Endothelial cell of umbilical vein (primary cell): ENCODE measurements at regions of chr7 and their contacts with region 1.

Region 1: DNA sequence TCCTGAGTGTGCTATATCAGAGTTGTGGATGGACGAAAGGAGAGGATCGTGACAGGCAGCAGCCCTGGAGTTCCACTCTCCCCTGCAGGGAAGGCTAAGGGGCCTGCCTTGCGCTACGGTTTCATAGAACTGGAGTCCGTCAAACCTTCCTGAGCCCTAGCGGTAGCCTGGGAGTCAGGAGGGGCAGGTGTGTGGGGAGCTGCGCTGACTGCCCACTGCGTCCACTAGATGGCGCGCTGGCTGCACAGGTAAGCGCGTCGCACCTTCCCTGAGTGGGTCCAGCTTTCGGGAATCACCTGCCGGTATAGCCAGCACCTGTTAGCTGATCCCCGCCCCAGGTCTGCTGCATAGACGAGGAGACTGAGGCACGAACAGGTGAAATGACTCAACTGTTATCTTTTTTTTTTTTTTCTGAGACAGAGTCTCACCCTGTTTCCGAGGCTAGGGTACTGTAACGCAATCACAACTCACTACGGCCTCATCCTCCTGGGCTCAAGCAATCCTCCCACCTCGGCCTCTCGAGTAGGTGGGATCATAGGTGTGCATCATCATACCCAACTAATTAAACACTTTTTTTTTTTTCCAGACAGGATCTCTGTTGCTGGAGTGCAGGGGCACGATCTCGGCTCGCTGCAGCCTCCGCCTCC is 20.2 kb upstream of the BAIAP2L1 start:
- DNase-seq: peak; percentile 36
- H3K4me3 ChIP-seq: no peak overlapping the region
- H3K27ac ChIP-seq: no peak overlapping the region
- H3K4me1 ChIP-seq: peaks cover 13% of the 10 kb centered on the region
- H3K27me3 ChIP-seq: no peaks in the 10 kb centered on the region
- CTCF ChIP-seq: peak; percentile 79 to 95
- POLR2A ChIP-seq: no peak

Region 2: GRCh38 chr7:98021588-98022351 is 399.3 kb before region 1 on chr7:
- CTCF ChIA-PET with region 1: no interaction called
- POLR2A ChIA-PET with region 1: no interaction called
- dilution Hi-C with region 1: no loop called
- intact Hi-C with region 1: no loop called
- DNase-seq: peak; percentile 46
- H3K4me3 ChIP-seq: no peak overlapping the region
- H3K27ac ChIP-seq: no peak overlapping the region
- H3K4me1 ChIP-seq: no peaks in the 10 kb centered on the region
- H3K27me3 ChIP-seq: no peaks in the 10 kb centered on the region
- CTCF ChIP-seq: peak; percentile 87 to 94
- POLR2A ChIP-seq: no peak

Region 3: DNA sequence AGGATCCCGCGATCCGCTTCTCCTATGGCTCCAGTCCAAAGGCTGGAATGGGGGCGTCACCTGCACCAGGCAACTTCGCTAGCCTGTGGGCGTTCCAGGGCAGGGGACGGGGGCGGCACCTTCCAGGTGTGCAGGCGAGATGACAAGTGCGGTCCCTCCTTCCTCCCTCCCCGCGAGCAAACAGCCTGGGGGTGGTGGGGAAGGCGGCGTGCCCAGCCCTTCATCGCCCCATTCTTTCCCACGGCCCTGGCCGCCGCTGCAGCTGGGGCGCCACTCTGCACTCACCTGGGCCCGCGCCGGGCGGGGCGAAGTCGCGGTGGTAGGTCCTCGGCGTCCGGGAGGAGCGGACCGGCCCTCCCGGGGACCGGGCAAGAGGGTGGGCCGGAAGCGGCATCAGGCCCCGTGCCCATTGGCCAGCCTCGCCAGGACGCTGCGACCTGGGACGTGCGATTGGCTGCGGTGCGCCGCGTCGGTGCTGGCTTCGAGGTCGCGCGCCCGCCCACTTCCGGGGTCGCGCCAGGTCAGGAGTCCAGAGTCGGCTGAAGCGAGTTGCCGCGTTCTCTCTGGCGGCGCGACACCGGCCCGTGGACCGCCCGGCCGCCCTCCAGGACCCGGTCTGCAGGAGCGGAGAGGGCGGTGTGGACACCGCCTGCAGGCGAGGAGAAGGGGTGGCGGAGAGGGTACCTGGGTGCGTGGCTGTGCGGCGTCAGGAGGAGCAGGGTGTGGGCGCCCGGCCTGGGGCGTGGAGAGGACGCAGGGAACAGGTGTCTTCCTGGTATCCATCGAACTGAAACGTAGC is 169.0 kb before region 1 on chr7 and contains the start of gene TECPR1:
- CTCF ChIA-PET with region 1: no interaction called
- POLR2A ChIA-PET with region 1: interaction called, 4 read pairs
- dilution Hi-C with region 1: no loop called
- intact Hi-C with region 1: loop called (anchors 1 kb)
- DNase-seq: peak; percentile 89
- H3K4me3 ChIP-seq: peak within 1 kb of the TSS; percentile 53 to 96 (median 65)
- H3K27ac ChIP-seq: peak within 1 kb of the TSS; percentile 58
- H3K4me1 ChIP-seq: peaks cover 43% of the 10 kb centered on the region
- H3K27me3 ChIP-seq: no peaks in the 10 kb centered on the region
- CTCF ChIP-seq: no peak
- POLR2A ChIP-seq: peak; percentile 35
- total RNA-seq, gene TECPR1: 84.9 and 97.5 TPM in 2 replicates

Region 4: GRCh38 chr7:98354511-98355257 is 66.4 kb before region 1 on chr7:
- CTCF ChIA-PET with region 1: interaction called, 3 read pairs
- POLR2A ChIA-PET with region 1: no interaction called
- dilution Hi-C with region 1: no loop called
- intact Hi-C with region 1: loop called (anchors 1 kb)
- DNase-seq: peak; percentile 68
- H3K4me3 ChIP-seq: no peak overlapping the region
- H3K27ac ChIP-seq: peak overlapping the region; percentile 14
- H3K4me1 ChIP-seq: peaks cover 19% of the 10 kb centered on the region
- H3K27me3 ChIP-seq: no peaks in the 10 kb centered on the region
- CTCF ChIP-seq: no peak
- POLR2A ChIP-seq: no peak

Region 5: DNA sequence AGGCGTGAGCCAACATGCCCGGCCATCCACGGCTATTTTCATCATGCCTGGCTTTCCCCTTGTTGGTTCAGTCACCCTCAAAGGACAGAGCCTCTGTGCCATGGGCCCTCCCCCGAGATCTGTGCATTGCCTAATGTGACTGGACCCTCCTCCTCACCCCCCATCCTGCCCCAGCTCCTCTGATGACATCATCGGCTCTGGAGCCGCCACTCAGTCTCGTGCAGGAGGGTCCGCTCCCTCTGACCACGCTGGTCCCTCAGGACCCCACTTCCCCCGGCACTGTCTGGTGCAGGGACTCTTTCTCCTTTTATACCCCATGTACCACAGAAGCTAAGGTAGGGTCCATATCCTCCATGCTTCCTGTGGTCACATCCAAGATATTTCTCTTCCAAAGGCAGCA is 13.0 kb after region 1 on chr7:
- CTCF ChIA-PET with region 1: interaction called, 15 read pairs
- POLR2A ChIA-PET with region 1: no interaction called
- dilution Hi-C with region 1: no loop called
- intact Hi-C with region 1: no loop called
- DNase-seq: no peak
- H3K4me3 ChIP-seq: no peak overlapping the region
- H3K27ac ChIP-seq: no peak overlapping the region
- H3K4me1 ChIP-seq: no peaks in the 10 kb centered on the region
- H3K27me3 ChIP-seq: no peaks in the 10 kb centered on the region
- CTCF ChIP-seq: no peak
- POLR2A ChIP-seq: no peak

Region 6: GRCh38 chr7:98841179-98841997 is 420.3 kb after region 1 on chr7:
- CTCF ChIA-PET with region 1: interaction called, 19 read pairs
- POLR2A ChIA-PET with region 1: no interaction called
- dilution Hi-C with region 1: no loop called
- intact Hi-C with region 1: no loop called
- DNase-seq: peak; percentile 56
- H3K4me3 ChIP-seq: no peak overlapping the region
- H3K27ac ChIP-seq: no peak overlapping the region
- H3K4me1 ChIP-seq: no peaks in the 10 kb centered on the region
- H3K27me3 ChIP-seq: no peaks in the 10 kb centered on the region
- CTCF ChIP-seq: peak; percentile 93 to 99
- POLR2A ChIP-seq: no peak